Endothelial cell of umbilical vein (primary cell): ENCODE measurements at regions of chr7 and their contacts with region 1.

Region 1: GRCh38 chr7:96075510-96076349 is 246.2 kb downstream of the SLC25A13 start:
- DNase-seq: peak; percentile 56
- H3K4me3 ChIP-seq: peak overlapping the region; percentile 46 to 80 (median 80)
- H3K27ac ChIP-seq: no peak overlapping the region
- H3K4me1 ChIP-seq: peaks cover 8% of the 10 kb centered on the region
- H3K27me3 ChIP-seq: peaks cover 0 to 3% of the 10 kb centered on the region in 2 experiments
- CTCF ChIP-seq: peak; percentile 88 to 90
- POLR2A ChIP-seq: no peak

Region 2: DNA sequence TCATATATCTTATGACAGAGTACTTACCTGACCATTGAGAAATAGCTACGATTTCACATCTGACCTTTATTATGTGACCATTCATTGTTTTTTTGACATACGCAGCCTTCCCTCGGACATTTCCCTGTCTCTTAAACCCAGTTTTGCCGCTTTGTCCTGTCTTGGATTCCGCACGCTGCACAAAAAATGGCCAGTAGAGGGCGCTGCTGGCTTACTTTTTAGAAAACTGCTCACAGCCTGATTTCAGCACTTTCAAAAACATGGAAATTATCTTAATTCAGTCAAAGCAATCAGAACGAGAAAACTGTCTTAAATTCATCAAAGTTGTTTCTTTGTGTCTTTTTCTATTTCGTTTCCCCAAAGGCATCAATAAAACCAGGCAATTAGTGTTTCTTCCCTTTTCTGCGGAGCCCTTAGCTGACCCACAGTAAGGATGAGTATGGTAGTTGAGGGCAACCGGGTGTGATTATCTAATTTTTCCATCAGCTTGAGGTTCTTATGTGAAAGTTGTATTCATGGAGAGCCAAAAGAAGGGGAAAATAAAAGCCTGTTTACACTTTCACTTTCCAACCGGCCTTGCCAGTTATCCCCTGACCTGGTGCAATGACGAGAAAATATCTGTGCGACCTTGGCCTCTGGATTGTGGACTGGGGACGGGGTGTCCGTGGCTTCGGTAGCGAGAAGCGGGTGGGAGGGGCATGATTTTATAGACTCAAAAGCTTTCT is 159.0 kb before region 1 on chr7:
- CTCF ChIA-PET with region 1: interaction called, 6 read pairs
- POLR2A ChIA-PET with region 1: no interaction called
- dilution Hi-C with region 1: no loop called
- intact Hi-C with region 1: loop called (anchors 1 kb)
- DNase-seq: peak; percentile 77
- H3K4me3 ChIP-seq: no peak overlapping the region
- H3K27ac ChIP-seq: no peak overlapping the region
- H3K4me1 ChIP-seq: no peaks in the 10 kb centered on the region
- H3K27me3 ChIP-seq: peaks cover 20 to 21% of the 10 kb centered on the region in 2 experiments
- CTCF ChIP-seq: peak; percentile 72 to 94
- POLR2A ChIP-seq: no peak

Region 3: DNA sequence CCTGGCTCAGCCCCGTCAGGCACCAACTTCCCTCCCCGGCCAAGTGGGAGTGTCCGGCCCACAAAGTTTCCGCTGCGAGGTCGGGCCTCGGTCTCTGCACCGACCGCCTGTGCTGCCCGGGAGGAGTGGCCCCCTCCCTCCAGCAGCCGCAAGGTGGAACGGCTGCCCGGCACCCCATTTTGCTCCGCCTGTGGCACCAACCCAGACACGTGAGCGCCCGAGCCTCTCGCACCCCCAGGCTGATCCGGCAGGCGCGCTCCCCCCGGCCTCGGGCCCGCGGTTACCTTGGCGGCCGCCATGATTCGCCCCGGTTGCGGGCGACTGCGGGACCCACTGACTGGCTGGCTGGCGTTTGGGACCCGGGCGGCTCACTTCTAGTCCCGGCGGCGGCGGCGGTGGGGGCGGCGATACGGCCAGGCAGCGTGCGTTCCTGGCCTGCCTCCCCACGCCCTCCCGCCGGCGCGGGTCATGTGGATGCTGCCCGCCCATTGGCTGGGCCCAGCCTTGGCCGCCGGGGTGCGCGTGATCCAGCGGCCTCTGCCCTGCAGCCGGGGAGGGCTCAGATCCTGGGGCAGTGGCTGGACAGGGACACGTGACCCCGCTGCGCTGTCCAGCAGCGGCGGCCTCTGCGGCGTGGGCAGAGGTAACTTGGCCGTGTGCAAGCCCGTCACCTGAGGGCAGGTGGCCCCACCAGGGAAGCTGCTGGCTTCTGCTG is 246.1 kb after region 1 on chr7 and contains the start of gene SLC25A13:
- CTCF ChIA-PET with region 1: no interaction called
- POLR2A ChIA-PET with region 1: no interaction called
- dilution Hi-C with region 1: no loop called
- intact Hi-C with region 1: loop called (anchors 2 kb)
- DNase-seq: peak; percentile 81
- H3K4me3 ChIP-seq: peak within 1 kb of the TSS; percentile 71 to 90 (median 86)
- H3K27ac ChIP-seq: peak within 1 kb of the TSS; percentile 85
- H3K4me1 ChIP-seq: peaks cover 14% of the 10 kb centered on the region
- H3K27me3 ChIP-seq: no peaks in the 10 kb centered on the region
- CTCF ChIP-seq: no peak
- POLR2A ChIP-seq: peak; percentile 74
- total RNA-seq, gene SLC25A13: 34.4 and 36.1 TPM in 2 replicates

Region 4: DNA sequence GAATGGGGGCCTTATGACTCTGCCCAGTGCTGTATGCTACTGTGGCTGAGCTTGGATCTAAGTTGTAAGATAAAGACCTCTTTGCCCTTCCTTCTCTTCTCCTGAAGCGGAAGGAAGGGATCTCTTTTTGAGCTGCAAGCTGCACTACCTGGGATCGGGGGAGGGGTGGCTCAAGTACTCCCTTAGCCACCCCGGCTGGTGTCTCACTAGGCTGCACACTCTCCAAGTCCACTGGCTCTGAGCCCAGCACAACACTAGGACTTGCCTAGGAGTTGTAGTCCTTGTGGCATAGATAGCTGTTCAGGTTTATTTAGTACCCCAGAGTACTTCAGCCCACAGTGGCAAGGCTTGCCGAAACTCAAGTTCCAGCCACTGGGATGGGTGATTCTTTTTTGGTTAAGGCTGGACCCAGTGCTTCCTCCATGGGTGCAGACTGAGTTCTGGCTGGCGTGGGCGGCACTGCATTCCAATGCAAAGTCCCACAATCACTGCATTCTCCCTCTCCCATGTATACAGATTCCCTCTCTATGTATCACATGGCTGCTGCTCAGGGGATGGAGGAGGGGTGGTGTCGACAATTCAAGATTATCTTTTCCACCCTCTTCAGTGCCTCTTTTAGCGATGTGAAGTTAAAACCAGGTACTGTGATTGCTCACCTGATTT is 322.3 kb after region 1 on chr7:
- CTCF ChIA-PET with region 1: no interaction called
- POLR2A ChIA-PET with region 1: no interaction called
- dilution Hi-C with region 1: no loop called
- intact Hi-C with region 1: no loop called
- DNase-seq: no peak
- H3K4me3 ChIP-seq: no peak overlapping the region
- H3K27ac ChIP-seq: no peak overlapping the region
- H3K4me1 ChIP-seq: no peaks in the 10 kb centered on the region
- H3K27me3 ChIP-seq: no peaks in the 10 kb centered on the region
- CTCF ChIP-seq: no peak
- POLR2A ChIP-seq: no peak

Region 5: DNA sequence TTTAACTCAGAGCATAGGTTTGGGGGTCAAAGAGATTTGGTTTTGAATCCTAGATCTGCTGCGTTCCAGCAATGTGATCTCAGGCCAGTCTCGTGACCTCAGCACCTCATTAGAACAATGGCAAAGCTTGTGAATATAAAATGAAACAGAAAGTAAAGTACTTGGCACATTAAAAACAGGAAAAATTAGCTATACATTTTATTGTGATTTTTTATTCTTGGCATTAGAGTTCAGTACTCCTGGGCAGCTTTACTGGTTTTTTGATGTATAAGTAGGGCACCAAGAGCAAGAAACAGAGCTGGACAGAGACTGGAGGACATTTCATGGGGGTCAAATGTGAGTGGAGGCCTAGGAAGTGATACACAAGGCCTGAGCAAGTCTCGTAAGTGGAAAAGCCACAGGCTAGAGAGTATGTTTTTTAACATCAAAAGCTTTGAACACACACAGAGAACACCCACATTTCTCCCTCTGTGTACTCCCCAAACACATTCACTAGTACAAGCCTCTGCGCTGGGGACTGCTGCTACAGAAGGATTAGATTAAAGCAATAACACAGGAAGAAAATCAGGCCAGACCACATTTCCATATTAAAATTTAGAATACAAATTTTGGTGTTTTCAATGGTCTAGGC is 403.4 kb after region 1 on chr7:
- CTCF ChIA-PET with region 1: no interaction called
- POLR2A ChIA-PET with region 1: no interaction called
- dilution Hi-C with region 1: no loop called
- intact Hi-C with region 1: loop called (anchors 10 kb)
- DNase-seq: peak; percentile 64
- H3K4me3 ChIP-seq: no peak overlapping the region
- H3K27ac ChIP-seq: no peak overlapping the region
- H3K4me1 ChIP-seq: no peaks in the 10 kb centered on the region
- H3K27me3 ChIP-seq: no peaks in the 10 kb centered on the region
- CTCF ChIP-seq: no peak
- POLR2A ChIP-seq: no peak

Region 6: DNA sequence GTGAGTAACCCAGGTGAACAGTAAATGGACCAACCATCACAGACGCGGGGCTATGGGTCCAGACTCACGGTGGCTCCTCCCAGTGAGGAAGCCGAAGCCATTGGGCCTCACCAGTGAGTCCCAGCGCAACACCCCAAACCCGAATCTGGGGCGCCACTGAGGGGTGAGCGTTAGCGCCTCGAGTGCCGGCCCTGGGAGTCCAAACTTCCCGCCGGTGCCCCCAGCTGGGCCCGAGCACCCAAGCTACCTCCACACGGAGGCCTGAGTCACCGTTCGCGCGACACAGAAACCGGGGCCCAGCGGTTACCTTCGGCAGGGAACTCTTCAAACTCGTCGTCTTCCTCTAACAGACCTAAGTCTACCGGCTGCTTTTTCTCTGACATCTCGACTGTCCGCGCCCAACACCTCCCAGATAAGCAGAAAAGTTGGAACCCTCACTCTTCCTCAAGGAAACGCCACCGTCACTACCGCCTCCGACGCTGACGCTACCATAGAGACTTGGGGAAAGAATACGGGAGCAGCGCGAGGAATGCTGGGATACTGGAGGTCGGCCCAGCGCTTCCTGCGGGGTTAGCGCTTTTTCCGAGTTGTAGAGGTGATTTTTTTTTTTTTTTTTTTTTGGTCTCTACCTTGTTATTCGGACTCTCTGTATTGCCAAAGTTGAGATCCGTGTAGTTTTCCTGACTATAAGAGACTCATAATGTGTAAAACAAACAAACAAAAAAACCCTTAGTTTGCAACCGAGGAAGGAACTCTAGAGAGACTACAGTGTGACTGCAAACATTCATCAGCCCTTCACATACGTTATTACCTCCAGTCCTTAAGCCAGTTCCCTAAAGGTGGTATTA is 633.9 kb after region 1 on chr7 and contains the start of gene SEM1:
- CTCF ChIA-PET with region 1: no interaction called
- POLR2A ChIA-PET with region 1: no interaction called
- dilution Hi-C with region 1: no loop called
- intact Hi-C with region 1: loop called (anchors 5 kb)
- DNase-seq: peak; percentile 91
- H3K4me3 ChIP-seq: peak within 1 kb of the TSS; percentile 70 to 98 (median 73)
- H3K27ac ChIP-seq: peak within 1 kb of the TSS; percentile 96
- H3K4me1 ChIP-seq: peaks cover 15% of the 10 kb centered on the region
- H3K27me3 ChIP-seq: peaks cover 0 to 4% of the 10 kb centered on the region in 2 experiments
- CTCF ChIP-seq: no peak
- POLR2A ChIP-seq: peak; percentile 80
- total RNA-seq, gene SEM1: 81.6 and 94.7 TPM in 2 replicates